ENCODE measurements at regions of chr2 and their contacts with region 1.

Region 1: GRCh38 chr2:95121407-95122196 is at the start of gene MRPS5:
- DNase-seq: peak; percentile 98
- H3K4me3 ChIP-seq: peak within 1 kb of the TSS; percentile 82 to 99 (median 95)
- H3K27ac ChIP-seq: peak within 1 kb of the TSS; percentile 72 to 98 (median 96)
- H3K4me1 ChIP-seq: peaks cover 17 to 53% (median 40%) of the 10 kb centered on the region in 6 donors
- H3K27me3 ChIP-seq: no peaks in the 10 kb centered on the region
- CTCF ChIP-seq: no peak
- POLR2A ChIP-seq: peak in 1 of 3 donors; percentile 40
- total RNA-seq, gene MRPS5: 37.5 to 63.6 (median 45.8) TPM

Region 2: DNA sequence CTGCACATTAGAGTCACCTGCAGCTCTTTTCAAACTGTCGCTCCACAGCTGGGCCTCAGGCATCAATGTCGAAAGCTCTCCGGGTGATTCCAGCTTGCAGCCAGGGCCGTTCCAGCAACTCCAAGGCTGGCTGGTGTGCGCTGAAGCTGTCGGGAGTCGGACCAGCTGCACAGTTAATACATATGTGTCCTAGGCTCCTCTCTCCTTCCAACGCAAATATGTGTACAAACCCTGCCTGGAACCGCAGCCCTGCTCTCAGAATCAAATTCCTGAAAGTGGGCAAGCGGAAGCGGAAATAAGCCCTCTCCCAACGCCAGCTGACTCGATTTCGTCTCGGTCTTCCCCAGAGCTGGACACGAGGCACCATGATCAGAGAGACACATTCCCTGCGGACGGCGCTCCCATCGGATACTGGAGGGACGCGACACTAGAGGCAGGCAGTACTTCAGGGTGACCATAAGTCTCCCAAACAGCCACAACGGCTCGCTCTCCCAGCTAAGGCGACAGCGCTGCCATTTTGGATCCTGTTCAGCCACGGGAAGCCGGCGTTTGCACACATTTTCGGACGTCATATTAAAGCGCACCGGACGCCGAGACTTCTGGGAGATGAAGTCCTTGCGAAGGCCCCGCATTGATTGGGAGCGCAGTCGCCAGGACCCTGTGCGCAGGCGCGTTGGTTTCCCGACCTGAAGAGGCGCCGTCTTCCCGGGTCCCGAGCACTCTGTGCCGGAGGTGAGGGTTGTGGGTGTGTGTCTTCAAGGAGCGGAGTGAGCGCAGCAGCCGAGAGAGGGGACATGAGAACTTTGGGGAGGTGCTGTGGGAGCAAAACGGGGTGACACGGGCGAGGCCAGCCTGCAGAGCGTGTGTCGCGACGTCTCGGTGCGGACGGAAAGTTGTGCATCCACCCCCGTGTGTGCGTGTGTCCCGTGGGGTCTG is 43.8 kb after region 1 on chr2 and contains the start of gene ZNF2:
- intact Hi-C with region 1: loop called (anchors 5 kb)
- DNase-seq: peak; percentile 98
- H3K4me3 ChIP-seq: peak within 1 kb of the TSS; percentile 68 to 92 (median 83)
- H3K27ac ChIP-seq: peak within 1 kb of the TSS; percentile 86 to 95 (median 92)
- H3K4me1 ChIP-seq: peaks cover 14 to 33% (median 25%) of the 10 kb centered on the region in 6 donors
- H3K27me3 ChIP-seq: no peaks in the 10 kb centered on the region
- CTCF ChIP-seq: peak in 3 of 11 experiments; percentile 8 to 21 (median 16)
- POLR2A ChIP-seq: peak in 1 of 3 donors; percentile 22
- total RNA-seq, gene ZNF2: 4.0 to 8.3 (median 5.1) TPM